Activated CD4-positive, alpha-beta T cell treated with anti-CD3 and anti-CD28 coated beads, Interleukin-2, amount 10 ng/mL, durations not matched to agents 24 days and 14 days (primary cell): ENCODE measurements at regions of chr3 and their contacts with region 1.

Region 1: GRCh38 chr3:168511428-168512014 is 415.8 kb upstream of the GOLIM4 start:
- DNase-seq: no peak
- H3K4me3 Mint-ChIP-seq: no peak overlapping the region
- H3K27ac Mint-ChIP-seq: no peak overlapping the region
- H3K4me1 Mint-ChIP-seq: no peaks in the 10 kb centered on the region
- H3K27me3 Mint-ChIP-seq: no peaks in the 10 kb centered on the region

Region 2: DNA sequence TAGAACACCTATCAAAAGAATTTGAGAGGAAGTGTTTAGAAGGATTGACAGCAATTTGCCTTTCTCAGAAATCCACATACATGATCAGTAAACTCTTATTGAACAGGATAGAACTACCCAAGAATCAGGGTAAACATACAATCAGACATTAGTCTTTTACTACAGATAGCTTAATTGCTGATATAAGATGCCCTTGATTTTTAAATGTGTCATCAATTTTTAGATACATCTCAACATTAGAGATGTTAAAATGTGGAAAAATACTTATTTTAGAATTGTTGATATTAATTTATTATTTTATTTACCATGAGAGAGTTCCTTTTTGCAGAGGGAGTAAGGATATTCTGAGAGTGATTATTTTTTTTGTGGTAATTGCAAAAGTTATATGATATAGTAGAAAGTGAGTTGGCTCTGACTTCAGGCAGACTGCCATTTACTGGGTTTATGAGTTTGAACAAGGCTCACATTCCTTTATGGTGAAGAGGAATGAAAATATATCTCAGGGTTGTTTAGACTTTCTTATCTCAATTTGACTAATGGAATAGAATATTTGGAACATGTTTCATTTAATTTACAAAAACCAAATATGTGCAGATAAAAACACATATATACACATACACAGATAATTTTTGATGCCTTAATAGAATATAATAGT is 113.0 kb before region 1 on chr3:
- intact Hi-C with region 1: no loop called
- DNase-seq: no peak
- H3K4me3 Mint-ChIP-seq: no peak overlapping the region
- H3K27ac Mint-ChIP-seq: no peak overlapping the region
- H3K4me1 Mint-ChIP-seq: no peaks in the 10 kb centered on the region
- H3K27me3 Mint-ChIP-seq: no peaks in the 10 kb centered on the region

Region 3: DNA sequence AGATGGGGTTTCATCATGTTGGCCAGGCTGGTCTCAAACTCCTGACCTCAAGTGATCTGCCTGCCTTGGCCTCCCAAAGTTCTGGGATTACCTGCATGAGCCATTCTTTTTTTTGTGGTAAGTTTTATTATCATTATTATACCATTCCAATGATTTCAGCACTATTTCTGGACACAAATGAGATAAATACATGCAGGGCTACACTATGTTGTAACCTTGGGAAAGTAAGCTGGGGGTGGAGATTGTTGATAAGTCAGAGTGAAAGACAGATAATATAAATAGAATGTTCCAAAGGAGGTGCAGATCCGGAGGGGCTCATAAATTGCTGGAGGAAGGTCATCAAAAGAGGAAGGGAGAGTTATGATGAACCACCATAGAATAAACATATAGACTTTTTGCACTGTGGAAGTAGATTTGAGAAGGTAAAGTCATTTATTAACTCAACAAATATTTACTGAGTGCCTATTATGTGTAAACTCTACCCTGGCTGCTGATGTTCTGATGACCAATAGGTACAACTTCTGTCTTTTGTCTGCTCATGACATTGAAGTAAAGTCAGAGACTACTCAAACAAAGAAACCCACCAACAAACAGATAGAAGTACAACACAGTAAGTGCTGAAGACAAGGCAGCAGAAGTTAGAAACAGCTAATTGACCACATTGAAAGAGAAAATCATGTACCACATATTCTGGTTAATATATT is 63.1 kb after region 1 on chr3:
- intact Hi-C with region 1: no loop called
- DNase-seq: no peak
- H3K4me3 Mint-ChIP-seq: no peak overlapping the region
- H3K27ac Mint-ChIP-seq: no peak overlapping the region
- H3K4me1 Mint-ChIP-seq: no peaks in the 10 kb centered on the region
- H3K27me3 Mint-ChIP-seq: no peaks in the 10 kb centered on the region

Region 4: DNA sequence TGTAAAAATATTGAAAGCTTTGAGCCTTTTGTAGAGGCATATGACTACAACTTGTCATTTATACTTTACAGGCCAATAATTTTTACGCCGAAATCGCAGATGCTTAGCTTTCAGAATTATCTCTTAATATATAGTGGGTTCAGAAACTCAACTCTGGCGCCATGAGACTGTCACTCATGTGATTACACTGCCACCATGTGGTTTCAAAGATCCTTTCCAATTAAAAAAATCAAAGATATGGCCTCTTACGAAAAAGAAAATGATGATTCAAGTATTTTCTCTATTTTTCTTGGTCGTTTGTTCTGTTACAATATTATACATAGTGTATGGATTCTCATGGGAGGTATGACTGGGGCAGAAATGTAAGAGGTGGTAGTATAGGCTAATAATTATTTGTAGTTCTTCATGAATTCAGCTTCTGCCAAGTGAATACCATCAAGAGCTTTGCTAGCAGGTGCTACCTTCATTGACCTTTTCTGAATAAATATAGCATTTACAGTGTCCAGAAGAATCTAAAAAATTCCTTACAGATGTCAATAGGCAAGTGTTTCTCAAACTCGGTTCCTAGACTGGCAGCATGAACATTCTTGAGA is 335.9 kb after region 1 on chr3:
- intact Hi-C with region 1: loop called (anchors 10 kb)
- DNase-seq: no peak
- H3K4me3 Mint-ChIP-seq: no peak overlapping the region
- H3K27ac Mint-ChIP-seq: no peak overlapping the region
- H3K4me1 Mint-ChIP-seq: no peaks in the 10 kb centered on the region
- H3K27me3 Mint-ChIP-seq: peaks cover 2% of the 10 kb centered on the region